Posterior vena cava (tissue), 2 donors: ENCODE measurements at regions of chr15 and their contacts with region 1.

Region 1: DNA sequence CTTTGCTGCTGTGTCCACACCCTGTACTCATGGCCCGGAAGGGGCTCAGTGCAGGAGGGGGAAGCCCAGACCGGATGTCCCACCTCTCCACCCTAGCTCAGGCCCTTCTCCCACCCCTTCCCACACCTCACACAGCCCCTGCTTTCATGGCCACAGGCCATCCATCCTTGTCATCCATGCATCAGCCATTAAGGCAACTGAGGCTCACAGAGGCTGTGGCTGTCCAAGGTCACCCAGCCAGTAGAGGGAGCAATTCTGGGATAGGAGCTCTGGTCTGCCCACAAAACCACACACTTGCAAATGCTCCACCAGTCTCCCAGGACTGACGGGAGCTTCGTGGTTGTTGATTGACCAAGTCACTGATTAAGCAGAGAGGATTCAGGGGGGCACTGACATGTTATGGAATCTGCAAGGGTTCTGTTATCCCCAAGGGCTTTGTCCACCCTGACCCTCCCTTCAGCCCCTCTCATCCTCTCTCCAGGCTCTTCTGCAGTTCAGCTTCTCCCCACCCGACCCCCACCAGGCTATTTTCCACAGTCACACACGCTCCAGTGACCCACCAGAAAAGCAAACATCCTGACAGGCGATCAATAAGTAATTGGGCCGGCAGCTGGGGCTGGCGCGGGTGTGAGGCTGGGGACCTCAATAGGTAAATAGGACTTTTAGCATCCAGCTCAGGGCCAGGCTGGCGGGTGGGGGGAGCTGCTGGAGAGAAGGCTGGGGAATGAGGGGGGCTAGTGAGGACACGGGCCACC is 15.1 kb downstream of the LINGO1 start:
- DNase-seq: no peak

Region 2: DNA sequence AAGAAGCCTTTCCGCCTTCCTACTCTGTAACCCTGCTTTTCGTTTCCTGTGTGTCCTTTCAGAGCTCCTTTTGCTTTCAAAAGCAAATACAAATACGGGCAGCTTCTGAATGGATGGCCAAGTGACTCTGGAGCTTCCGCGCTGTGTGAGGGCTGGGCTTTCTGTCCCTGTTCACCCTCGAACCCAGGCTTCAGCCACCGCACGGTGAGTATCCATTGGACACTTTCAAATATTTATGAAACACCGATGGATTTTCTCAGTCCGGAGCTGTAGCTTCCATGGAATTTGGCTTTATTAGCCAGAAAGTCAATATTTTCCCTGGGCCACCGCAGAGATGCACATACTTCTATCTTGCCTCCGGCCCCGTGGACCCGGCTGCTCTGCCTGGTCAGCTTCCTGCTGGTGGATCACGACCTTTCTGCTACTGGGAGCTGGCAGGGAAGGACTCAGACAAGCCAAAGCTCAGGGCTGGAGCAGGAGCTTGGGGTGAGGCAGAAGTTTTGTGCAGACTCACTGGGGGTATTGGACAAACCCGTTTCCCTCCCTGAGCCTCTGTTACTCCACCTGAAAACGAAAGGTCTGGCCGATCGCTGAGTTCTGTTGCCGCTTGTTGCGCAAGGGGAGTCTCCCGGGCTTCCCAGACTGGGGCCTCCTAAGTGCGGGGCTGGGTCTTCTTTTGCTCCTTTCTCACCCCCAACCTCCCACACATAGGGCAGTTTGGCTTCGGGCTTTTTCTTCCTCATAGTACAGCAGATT is 48.5 kb before region 1 on chr15:
- intact Hi-C with region 1: loop called in 1 of 2 experiments (anchors 10 kb)
- DNase-seq: no peak

Region 3: DNA sequence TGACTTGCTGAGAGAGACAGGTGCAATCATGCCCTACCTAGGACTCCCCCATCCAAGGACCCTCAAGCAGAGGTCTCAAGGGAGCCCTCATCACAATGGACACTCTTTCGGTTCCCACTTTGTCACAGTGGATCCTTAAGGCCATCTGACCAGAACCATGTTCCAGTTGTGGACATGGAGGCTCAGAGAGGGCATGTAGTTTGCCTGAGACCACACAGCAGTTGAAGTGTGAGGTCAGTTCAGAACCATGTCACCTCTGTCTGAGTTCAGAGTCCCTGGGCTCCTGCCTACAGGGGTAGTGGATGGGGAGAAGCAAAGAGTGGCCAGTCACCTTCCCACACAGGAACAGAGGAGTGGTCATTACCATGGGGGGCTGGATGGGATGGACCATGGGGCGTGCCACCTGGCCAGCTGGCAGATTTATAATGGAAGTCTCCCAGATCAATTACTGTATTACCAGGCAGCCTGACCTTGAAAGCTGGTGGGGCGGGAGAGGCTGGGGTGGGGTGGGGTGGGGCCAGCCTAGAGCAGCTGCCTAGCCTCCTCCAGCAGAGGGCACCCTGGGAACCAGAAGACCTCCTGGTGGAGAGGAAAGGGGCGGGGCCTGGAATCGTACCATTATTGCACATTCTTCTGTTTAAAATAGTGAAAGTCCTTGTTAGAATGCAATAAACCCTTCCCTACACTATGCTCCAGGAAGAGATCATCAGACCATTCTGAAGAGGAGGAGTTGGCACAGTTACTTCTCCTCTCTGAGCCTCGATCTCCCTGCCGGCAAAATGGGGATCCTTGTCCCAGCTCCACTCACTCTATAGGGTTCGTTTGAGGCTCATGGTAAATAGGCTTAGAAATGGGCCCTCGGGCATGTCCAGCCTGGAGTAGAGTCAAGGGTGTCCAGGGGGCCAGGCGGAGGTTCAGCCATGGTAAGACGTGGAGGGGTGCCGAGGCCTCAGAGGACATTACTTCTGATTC is 42.0 kb after region 1 on chr15:
- intact Hi-C with region 1: no loop called
- DNase-seq: no peak

Region 4: DNA sequence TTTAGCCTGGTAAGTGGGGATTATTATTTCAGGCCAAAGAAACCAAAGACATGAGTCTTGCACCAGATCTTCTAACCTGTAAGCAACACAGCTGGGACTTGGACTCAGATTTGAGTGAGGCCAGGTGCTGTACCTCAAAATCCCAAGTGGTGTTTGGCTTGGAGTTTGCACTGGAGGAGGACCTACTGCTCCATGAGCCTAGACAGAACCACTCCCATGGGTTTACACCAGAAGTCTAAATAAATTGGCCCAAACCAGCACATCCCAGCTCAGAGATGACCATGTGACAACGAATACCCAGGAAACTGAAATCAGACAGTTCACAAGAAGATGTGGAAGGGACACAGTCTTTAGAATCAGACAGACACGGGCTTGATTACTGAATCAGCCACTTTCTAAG is 1862.0 kb after region 1 on chr15:
- intact Hi-C with region 1: loop called in 1 of 2 experiments (anchors 10 kb)
- DNase-seq: no peak